Naive thymus-derived CD4-positive, alpha-beta T cell (primary cell): ENCODE measurements at regions of chr5 and their contacts with region 1.

Region 1: GRCh38 chr5:172770675-172771438 is at the start of gene DUSP1:
- DNase-seq: peak; percentile 94 to 99 (median 96)
- ATAC-seq: peak; percentile 64
- H3K4me3 ChIP-seq: peak within 1 kb of the TSS; percentile 81
- H3K4me3 Mint-ChIP-seq: peak within 1 kb of the TSS; percentile 89 to 97 (median 94)
- H3K27ac ChIP-seq: peak within 1 kb of the TSS; percentile 97
- H3K27ac Mint-ChIP-seq: peak within 1 kb of the TSS; percentile 97 to 100 (median 100)
- H3K4me1 ChIP-seq: peaks cover 26 to 39% of the 10 kb centered on the region in 2 donors
- H3K4me1 Mint-ChIP-seq: peaks cover 21 to 73% (median 63%) of the 10 kb centered on the region in 7 donors
- H3K27me3 ChIP-seq: no peaks in the 10 kb centered on the region
- H3K27me3 Mint-ChIP-seq: no peaks in the 10 kb centered on the region
- total RNA-seq, gene DUSP1: 5.4 to 2,522 (median 40.7) TPM

Region 2: DNA sequence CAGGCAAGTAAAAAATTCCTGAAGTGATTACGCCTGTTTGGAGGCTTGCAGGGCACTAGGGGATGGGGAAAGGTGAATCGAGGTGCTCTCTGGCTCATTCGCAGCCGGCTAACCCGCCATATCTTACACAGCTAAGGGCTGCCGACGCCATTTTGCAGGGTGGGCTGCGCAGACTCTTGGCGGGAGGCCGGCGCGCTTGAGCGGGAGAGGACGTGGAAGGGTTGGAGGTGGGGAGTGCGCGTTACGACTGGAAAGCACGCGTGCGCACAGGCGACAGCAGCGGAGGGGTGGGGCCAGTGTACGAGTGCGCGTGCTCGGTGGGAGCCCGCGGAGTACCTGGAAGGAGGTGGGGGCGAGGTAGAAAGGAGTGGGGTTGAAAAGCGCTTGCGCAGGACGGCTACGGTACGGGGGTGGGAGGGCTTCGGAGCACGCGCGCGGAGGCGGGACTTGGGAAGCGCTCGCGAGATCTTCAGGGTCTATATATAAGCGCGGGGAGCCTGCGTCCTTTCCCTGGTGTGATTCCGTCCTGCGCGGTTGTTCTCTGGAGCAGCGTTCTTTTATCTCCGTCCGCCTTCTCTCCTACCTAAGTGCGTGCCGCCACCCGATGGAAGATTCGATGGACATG is 1383.4 kb before region 1 on chr5 and contains the start of gene NPM1:
- CTCF ChIA-PET with region 1: no interaction called
- POLR2A ChIA-PET with region 1: interaction called, 5 read pairs
- intact Hi-C with region 1: loop called in 1 of 2 experiments (anchors 5 kb)
- DNase-seq: peak; percentile 90 to 99 (median 98)
- ATAC-seq: peak; percentile 93
- H3K4me3 ChIP-seq: peak within 1 kb of the TSS; percentile 91
- H3K4me3 Mint-ChIP-seq: peak within 1 kb of the TSS; percentile 92 to 99 (median 98)
- H3K27ac ChIP-seq: peak within 1 kb of the TSS; percentile 88
- H3K27ac Mint-ChIP-seq: peak within 1 kb of the TSS; percentile 96 to 100 (median 98)
- H3K4me1 ChIP-seq: peaks cover 31 to 40% of the 10 kb centered on the region in 2 donors
- H3K4me1 Mint-ChIP-seq: peaks cover 25 to 52% (median 49%) of the 10 kb centered on the region in 7 donors
- H3K27me3 ChIP-seq: no peaks in the 10 kb centered on the region
- H3K27me3 Mint-ChIP-seq: peaks cover 0 to 6% (median 0%) of the 10 kb centered on the region in 5 donors
- total RNA-seq, gene NPM1: 807 to 1,238 (median 1,192) TPM

Region 3: DNA sequence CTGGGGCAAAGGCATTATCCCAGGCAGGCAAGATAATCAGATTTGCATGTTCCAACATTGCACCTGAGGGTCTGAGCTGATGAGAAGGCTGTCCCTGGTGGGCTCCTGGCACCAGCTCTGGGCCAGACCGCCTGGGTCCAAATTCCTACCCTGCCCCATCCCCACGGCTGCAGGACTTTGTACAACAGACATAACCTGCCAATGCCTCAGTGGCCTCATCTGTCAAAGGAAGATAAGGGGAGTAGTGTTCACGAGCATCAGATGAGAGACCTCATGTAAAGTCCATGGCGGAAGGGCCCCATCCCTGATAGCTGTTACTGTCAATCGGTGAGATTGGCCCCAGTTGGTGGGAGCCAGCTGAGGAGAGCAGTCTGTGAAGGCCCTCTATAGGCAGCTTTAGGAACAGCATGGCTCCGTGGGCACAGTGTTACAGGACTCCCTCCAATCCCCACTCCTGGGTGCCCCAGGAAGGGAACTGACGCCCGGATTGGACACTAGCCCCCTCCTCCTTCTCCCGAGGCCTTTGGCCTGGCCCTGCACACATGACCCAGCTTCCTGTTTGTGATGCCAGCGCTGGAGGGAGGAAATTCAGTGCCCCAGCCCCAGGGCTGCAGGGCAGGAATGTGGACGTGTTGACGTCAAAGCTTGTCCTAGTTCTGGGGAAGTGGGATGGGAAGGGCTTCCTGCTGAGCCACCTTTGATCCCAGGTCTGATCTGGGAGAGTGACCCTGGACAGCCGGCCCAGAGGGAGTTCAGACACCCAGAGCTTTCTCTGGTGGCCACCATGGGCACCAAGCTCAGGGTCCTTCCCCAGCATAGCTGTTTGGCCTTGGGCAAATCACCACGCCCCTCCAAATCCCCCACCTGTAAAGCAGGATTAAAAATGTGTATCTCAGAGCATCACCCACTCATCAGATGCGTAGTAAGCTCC is 56.1 kb before region 1 on chr5:
- CTCF ChIA-PET with region 1: interaction called, 33 read pairs
- POLR2A ChIA-PET with region 1: interaction called, 27 read pairs
- intact Hi-C with region 1: loop called (anchors 1 kb)
- DNase-seq: peak; percentile 38 to 65 (median 57)
- ATAC-seq: peak; percentile 85
- H3K4me3 ChIP-seq: no peak overlapping the region
- H3K4me3 Mint-ChIP-seq: no peak overlapping the region
- H3K27ac ChIP-seq: no peak overlapping the region
- H3K27ac Mint-ChIP-seq: peak overlapping the region in 4 of 9 donors; percentile 17 to 72 (median 38)
- H3K4me1 ChIP-seq: peaks cover 0 to 7% of the 10 kb centered on the region in 2 donors
- H3K4me1 Mint-ChIP-seq: peaks cover 0 to 8% (median 5%) of the 10 kb centered on the region in 7 donors
- H3K27me3 ChIP-seq: no peaks in the 10 kb centered on the region
- H3K27me3 Mint-ChIP-seq: peaks cover 0 to 18% (median 11%) of the 10 kb centered on the region in 5 donors

Region 4: DNA sequence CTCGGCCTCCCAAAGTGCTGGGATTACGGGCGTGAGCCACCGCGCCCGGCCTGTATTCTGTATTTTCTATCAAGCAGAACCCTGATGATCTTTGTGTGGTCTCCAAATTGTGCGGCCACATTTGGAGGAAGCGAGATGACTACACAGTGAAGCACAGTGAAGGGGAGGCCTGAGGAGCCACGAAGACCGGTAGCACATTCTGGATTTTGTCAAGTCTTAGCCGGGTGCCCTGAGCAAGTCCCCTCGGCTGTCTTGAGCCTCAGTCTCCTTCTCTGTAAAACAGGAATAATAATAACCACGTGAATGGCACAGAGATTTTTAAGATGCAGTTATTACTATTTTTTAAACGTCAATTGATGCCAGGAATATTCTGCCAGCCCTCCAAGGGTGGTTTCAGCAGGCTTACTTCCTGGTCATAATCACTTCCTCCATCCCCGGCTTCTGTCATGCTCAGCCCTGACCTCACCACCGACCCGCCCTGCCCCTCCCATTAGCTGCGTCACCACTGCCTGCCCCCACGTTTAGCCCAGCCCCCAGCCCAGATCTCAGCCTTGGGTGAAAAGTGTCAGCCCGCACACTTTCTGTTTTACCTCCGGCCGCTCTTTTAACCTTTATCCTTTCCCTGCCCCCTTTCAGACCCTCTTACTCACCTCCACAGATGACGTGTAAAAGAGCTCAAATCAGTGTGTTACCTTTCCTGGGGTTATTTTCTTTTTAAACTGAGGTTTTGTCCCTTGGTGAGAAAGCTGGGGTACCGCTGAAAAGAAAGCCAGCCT is 36.2 kb after region 1 on chr5:
- CTCF ChIA-PET with region 1: interaction called, 7 read pairs
- POLR2A ChIA-PET with region 1: interaction called, 10 read pairs
- intact Hi-C with region 1: loop called (anchors 1 kb)
- DNase-seq: peak; percentile 24 to 78 (median 52)
- ATAC-seq: peak; percentile 98
- H3K4me3 ChIP-seq: peak overlapping the region; percentile 45
- H3K4me3 Mint-ChIP-seq: peak overlapping the region; percentile 73 to 87 (median 84)
- H3K27ac ChIP-seq: peak overlapping the region; percentile 74
- H3K27ac Mint-ChIP-seq: peak overlapping the region; percentile 86 to 98 (median 93)
- H3K4me1 ChIP-seq: peaks cover 0 to 12% of the 10 kb centered on the region in 2 donors
- H3K4me1 Mint-ChIP-seq: peaks cover 9 to 17% (median 13%) of the 10 kb centered on the region in 7 donors
- H3K27me3 ChIP-seq: no peaks in the 10 kb centered on the region
- H3K27me3 Mint-ChIP-seq: peaks cover 0 to 2% (median 0%) of the 10 kb centered on the region in 5 donors

Region 5: GRCh38 chr5:173057062-173057924 is 286.4 kb after region 1 on chr5:
- CTCF ChIA-PET with region 1: no interaction called
- POLR2A ChIA-PET with region 1: no interaction called
- intact Hi-C with region 1: loop called in 1 of 2 experiments (anchors 1 kb)
- DNase-seq: peak; percentile 96 to 99 (median 98)
- ATAC-seq: peak; percentile 90
- H3K4me3 ChIP-seq: peak overlapping the region; percentile 96
- H3K4me3 Mint-ChIP-seq: peak overlapping the region; percentile 91 to 97 (median 94)
- H3K27ac ChIP-seq: peak overlapping the region; percentile 97
- H3K27ac Mint-ChIP-seq: peak overlapping the region; percentile 90 to 96 (median 94)
- H3K4me1 ChIP-seq: peaks cover 22 to 33% of the 10 kb centered on the region in 2 donors
- H3K4me1 Mint-ChIP-seq: peaks cover 21 to 72% (median 59%) of the 10 kb centered on the region in 7 donors
- H3K27me3 ChIP-seq: peaks cover 0 to 5% of the 10 kb centered on the region in 2 donors
- H3K27me3 Mint-ChIP-seq: no peaks in the 10 kb centered on the region

Region 6: GRCh38 chr5:173615884-173616576 is 845.2 kb after region 1 on chr5:
- CTCF ChIA-PET with region 1: no interaction called
- POLR2A ChIA-PET with region 1: no interaction called
- intact Hi-C with region 1: loop called in 1 of 2 experiments (anchors 2 kb)
- DNase-seq: peak; percentile 47 to 78 (median 73)
- ATAC-seq: peak; percentile 73
- H3K4me3 ChIP-seq: peak overlapping the region; percentile 71
- H3K4me3 Mint-ChIP-seq: peak overlapping the region; percentile 85 to 97 (median 92)
- H3K27ac ChIP-seq: peak overlapping the region; percentile 99
- H3K27ac Mint-ChIP-seq: peak overlapping the region; percentile 79 to 98 (median 93)
- H3K4me1 ChIP-seq: peaks cover 21 to 24% of the 10 kb centered on the region in 2 donors
- H3K4me1 Mint-ChIP-seq: peaks cover 28 to 60% (median 51%) of the 10 kb centered on the region in 7 donors
- H3K27me3 ChIP-seq: no peaks in the 10 kb centered on the region
- H3K27me3 Mint-ChIP-seq: no peaks in the 10 kb centered on the region

Region 7: GRCh38 chr5:173679909-173680630 is 909.2 kb after region 1 on chr5:
- CTCF ChIA-PET with region 1: no interaction called
- POLR2A ChIA-PET with region 1: no interaction called
- intact Hi-C with region 1: no loop called
- DNase-seq: no peak
- ATAC-seq: no peak
- H3K4me3 ChIP-seq: no peak overlapping the region
- H3K4me3 Mint-ChIP-seq: no peak overlapping the region
- H3K27ac ChIP-seq: no peak overlapping the region
- H3K27ac Mint-ChIP-seq: no peak overlapping the region
- H3K4me1 ChIP-seq: no peaks in the 10 kb centered on the region
- H3K4me1 Mint-ChIP-seq: peaks cover 0 to 4% (median 0%) of the 10 kb centered on the region in 7 donors
- H3K27me3 ChIP-seq: no peaks in the 10 kb centered on the region
- H3K27me3 Mint-ChIP-seq: peaks cover 0 to 21% (median 4%) of the 10 kb centered on the region in 5 donors